Ovary (tissue), 10 donors: ENCODE measurements at regions of chr2 and their contacts with region 1.

Region 1: GRCh38 chr2:42047488-42048298 is at the start of gene PKDCC:
- DNase-seq: peak; percentile 91 to 93 (median 92)
- H3K4me3 ChIP-seq: peak within 1 kb of the TSS; percentile 79
- H3K27ac ChIP-seq: peak within 1 kb of the TSS; percentile 93 to 95
- H3K4me1 ChIP-seq: peaks cover 23% of the 10 kb centered on the region
- H3K27me3 ChIP-seq: no peaks in the 10 kb centered on the region
- CTCF ChIP-seq: peak in 1 of 3 donors; percentile 30
- EP300 ChIP-seq: no peak
- POLR2A ChIP-seq: peak; percentile 91
- total RNA-seq, gene PKDCC: 90.6 to 576 (median 272) TPM

Region 2: DNA sequence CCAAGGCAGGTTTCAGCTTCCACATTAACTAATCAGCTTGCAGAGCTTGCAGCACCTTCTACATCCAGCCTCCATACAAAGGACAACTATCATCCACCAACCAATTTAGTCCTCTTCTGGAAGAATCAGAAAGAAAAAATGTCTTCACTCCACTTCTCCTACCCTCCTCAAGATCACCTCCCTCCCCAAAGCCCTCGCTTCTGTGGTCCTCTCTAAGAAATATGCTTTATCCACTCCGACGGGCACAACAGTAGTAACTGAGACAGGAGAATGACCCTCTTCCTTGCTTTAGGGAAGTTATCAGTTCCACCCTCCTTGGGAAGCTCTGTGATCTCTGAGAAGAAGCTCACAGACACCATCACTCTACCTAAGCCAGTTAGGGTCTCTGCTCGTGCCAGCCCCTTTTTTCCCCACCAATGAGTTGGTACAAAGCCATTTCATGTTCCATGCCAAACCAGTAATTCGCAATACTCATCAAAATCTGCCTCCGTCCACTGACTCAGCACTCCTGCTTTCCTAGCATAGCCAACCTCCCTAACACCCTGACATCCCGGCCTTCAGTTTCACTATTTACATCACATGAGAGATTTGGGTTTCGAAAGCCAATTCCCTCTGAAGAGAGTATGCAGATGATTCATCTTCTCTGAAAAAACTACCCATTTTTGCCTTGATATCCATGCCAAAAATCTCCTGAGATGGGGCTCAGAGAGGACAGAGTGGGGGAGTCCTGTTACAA is 113.9 kb before region 1 on chr2:
- intact Hi-C with region 1: loop called in 3 of 4 experiments (anchors 2 to 10 kb)
- DNase-seq: peak in 4 of 5 donors; percentile 57 to 79 (median 68)
- H3K4me3 ChIP-seq: no peak overlapping the region
- H3K27ac ChIP-seq: peak overlapping the region; percentile 41 to 88
- H3K4me1 ChIP-seq: peaks cover 39% of the 10 kb centered on the region
- H3K27me3 ChIP-seq: no peaks in the 10 kb centered on the region
- CTCF ChIP-seq: no peak
- EP300 ChIP-seq: peak; percentile 1
- POLR2A ChIP-seq: no peak

Region 3: GRCh38 chr2:42102024-42102590 is 54.4 kb after region 1 on chr2:
- intact Hi-C with region 1: no loop called
- DNase-seq: peak; percentile 73 to 81 (median 75)
- H3K4me3 ChIP-seq: peak overlapping the region; percentile 44
- H3K27ac ChIP-seq: peak overlapping the region; percentile 86 to 96
- H3K4me1 ChIP-seq: peaks cover 4% of the 10 kb centered on the region
- H3K27me3 ChIP-seq: no peaks in the 10 kb centered on the region
- CTCF ChIP-seq: no peak
- EP300 ChIP-seq: no peak
- POLR2A ChIP-seq: no peak